Prostate gland (tissue), 2 donors: ENCODE measurements at regions of chr14 and their contacts with region 1.

Region 1: DNA sequence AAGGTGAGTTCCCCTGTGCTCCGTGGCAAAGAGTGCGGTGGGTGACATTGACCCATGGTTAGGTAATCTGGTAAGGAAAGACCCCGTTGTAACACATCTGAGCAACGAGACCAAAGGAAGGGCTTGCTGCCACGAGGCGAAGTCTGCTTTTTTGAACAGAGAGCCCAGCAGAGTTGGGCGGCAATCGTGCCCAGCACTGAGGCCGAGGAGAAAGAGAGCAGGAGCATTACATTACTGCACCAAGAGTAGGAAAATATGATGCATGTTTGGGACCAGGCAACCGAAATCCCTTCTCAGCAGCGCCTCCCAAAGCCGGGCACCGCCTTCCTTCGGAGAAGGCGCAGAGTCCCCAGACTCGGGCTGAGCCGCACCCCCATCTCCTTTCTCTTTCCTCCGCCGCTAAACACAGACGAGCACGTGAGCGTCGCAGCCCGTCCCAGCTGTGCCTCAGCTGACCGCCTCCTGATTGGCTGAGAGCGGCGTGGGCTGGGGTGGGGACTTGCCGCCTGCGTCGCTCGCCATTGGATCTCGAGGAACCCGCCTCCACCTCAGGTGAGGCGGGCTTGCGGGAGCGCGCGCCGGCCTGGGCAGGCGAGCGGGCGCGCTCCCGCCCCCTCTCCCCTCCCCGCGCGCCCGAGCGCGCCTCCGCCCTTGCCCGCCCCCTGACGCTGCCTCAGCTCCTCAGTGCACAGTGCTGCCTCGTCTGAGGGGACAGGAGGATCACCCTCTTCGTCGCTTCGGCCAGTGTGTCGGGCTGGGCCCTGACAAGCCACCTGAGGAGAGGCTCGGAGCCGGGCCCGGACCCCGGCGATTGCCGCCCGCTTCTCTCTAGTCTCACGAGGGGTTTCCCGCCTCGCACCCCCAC is at the start of gene HIF1A:
- DNase-seq: peak; percentile 97
- H3K4me3 ChIP-seq: peak within 1 kb of the TSS; percentile 89 to 98
- H3K27ac ChIP-seq: peak within 1 kb of the TSS; percentile 99
- H3K4me1 ChIP-seq: no peaks in the 10 kb centered on the region
- H3K27me3 ChIP-seq: no peaks in the 10 kb centered on the region
- CTCF ChIP-seq: peak in 3 of 4 experiments; percentile 25 to 33 (median 29)
- POLR2A ChIP-seq: peak; percentile 96
- total RNA-seq, gene HIF1A: 61.7 to 101 TPM

Region 2: GRCh38 chr14:61516964-61517653 is 178.0 kb before region 1 on chr14:
- intact Hi-C with region 1: loop called (anchors 5 kb)
- DNase-seq: no peak
- H3K4me3 ChIP-seq: no peak overlapping the region
- H3K27ac ChIP-seq: peak overlapping the region; percentile 15 to 81
- H3K4me1 ChIP-seq: peaks cover 22% of the 10 kb centered on the region
- H3K27me3 ChIP-seq: no peaks in the 10 kb centered on the region
- CTCF ChIP-seq: no peak
- POLR2A ChIP-seq: no peak

Region 3: GRCh38 chr14:61620130-61620946 is 74.7 kb before region 1 on chr14:
- intact Hi-C with region 1: loop called (anchors 10 kb)
- DNase-seq: no peak
- H3K4me3 ChIP-seq: no peak overlapping the region
- H3K27ac ChIP-seq: no peak overlapping the region
- H3K4me1 ChIP-seq: no peaks in the 10 kb centered on the region
- H3K27me3 ChIP-seq: no peaks in the 10 kb centered on the region
- CTCF ChIP-seq: no peak
- POLR2A ChIP-seq: no peak

Region 4: DNA sequence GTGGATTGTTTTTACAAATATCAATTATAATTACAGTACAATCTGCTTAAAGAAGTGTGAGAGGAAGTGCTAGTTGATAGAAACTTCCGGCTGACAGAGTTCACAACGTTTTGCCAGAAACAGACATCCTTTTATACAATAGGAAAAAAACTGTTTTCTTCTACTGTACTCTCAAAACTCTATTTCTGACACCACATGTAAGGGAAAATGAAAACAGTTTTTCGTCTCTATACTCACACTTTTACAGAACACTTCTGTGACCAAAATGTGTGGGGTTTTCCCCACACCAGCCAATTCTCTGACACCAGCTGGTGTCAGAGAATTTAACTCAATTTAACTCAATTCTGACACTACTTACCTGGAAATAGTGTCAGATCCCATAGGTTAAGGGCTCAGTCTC is 24.0 kb before region 1 on chr14:
- intact Hi-C with region 1: no loop called
- DNase-seq: no peak
- H3K4me3 ChIP-seq: no peak overlapping the region
- H3K27ac ChIP-seq: no peak overlapping the region
- H3K4me1 ChIP-seq: no peaks in the 10 kb centered on the region
- H3K27me3 ChIP-seq: no peaks in the 10 kb centered on the region
- CTCF ChIP-seq: no peak
- POLR2A ChIP-seq: no peak

Region 5: GRCh38 chr14:62064751-62065323 is 369.8 kb after region 1 on chr14:
- intact Hi-C with region 1: no loop called
- DNase-seq: no peak
- H3K4me3 ChIP-seq: no peak overlapping the region
- H3K27ac ChIP-seq: no peak overlapping the region
- H3K4me1 ChIP-seq: no peaks in the 10 kb centered on the region
- H3K27me3 ChIP-seq: no peaks in the 10 kb centered on the region
- CTCF ChIP-seq: no peak
- POLR2A ChIP-seq: no peak